Aorta (tissue), 5 donors: ENCODE measurements at regions of chr14 and their contacts with region 1.

Region 1: DNA sequence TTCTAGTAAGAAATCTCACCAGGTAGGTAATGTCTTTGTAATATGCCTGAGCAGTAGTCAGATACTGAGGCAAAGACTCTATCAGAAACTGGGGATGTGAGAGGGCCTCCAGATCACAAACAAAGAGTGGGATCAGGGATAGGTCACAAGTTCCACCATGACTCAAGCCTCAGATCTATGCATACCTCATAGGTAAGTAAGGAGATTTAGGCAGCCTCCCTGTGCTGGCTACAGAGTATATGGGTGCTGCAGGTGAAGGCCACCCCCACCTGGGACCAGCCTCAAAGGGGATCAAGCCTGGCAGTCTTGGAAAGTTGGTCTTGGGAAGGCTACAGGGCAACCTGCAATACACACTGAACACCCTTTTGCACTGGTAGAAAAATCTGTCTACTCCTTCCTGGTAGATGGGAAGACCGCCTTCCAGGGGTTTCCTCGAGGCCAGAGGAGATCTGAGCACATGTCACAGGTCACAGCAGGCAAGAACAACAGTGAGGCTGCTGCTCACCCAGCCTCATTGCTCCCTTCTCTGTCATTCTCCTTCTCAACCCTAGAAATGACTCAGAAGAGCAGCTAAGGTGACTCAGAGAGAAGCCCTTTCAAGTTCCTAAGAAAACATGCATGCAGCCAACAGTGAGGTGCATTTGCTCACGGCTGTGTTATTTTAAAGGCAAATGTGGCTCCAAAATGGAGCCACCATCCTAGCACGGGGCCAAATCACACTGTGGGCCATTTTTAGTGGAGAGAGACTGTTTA is 143.4 kb upstream of the CDKN3 start:
- DNase-seq: peak in 1 of 2 donors; percentile 53
- ATAC-seq: peak; percentile 57
- H3K4me3 ChIP-seq: no peak overlapping the region
- H3K27ac ChIP-seq: no peak overlapping the region
- H3K4me1 ChIP-seq: peaks cover 0 to 4% of the 10 kb centered on the region in 2 donors
- H3K27me3 ChIP-seq: no peaks in the 10 kb centered on the region

Region 2: DNA sequence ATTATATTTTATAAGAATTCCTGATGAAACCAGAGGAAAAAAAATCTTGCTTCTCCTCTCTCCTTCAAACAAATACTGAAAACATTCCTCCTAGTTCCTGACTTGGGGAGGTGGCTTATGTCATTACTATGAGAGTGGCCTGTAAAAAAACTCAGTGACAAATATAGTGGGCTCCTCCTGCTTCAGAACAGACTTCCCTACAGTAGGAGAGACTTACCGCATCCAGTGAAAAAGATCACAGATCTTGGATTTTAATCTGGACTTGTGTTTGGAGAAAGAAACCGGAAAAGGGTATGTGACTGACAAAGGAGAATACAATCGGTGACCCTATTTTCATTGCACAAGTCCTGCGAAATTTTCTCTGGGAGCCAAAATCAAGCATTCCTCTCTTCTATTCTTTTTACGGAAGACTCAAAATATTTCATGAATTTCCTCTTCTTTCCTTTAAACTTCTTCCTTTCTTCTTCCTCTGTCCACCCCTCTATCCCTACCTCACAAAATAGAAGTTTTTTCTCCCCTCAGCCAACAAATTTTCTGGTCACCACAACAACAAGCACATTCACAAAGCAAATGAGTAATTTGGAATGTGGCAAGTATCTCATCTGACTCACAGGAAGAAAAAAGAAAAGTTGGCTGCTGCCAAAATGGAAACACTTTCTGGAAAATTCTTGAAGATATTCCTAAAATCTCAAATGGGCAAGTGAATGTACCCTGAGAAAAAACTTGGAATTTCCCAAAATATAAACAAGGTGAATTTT is 41.6 kb before region 1 on chr14:
- intact Hi-C with region 1: loop called in 1 of 2 experiments (anchors 5 kb)
- DNase-seq: no peak
- ATAC-seq: peak; percentile 64
- H3K4me3 ChIP-seq: no peak overlapping the region
- H3K27ac ChIP-seq: peak overlapping the region; percentile 28 to 51
- H3K4me1 ChIP-seq: no peaks in the 10 kb centered on the region
- H3K27me3 ChIP-seq: no peaks in the 10 kb centered on the region